Common myeloid progenitor, CD34-positive (primary cell): ENCODE measurements at regions of chr5 and their contacts with region 1.

Region 1: DNA sequence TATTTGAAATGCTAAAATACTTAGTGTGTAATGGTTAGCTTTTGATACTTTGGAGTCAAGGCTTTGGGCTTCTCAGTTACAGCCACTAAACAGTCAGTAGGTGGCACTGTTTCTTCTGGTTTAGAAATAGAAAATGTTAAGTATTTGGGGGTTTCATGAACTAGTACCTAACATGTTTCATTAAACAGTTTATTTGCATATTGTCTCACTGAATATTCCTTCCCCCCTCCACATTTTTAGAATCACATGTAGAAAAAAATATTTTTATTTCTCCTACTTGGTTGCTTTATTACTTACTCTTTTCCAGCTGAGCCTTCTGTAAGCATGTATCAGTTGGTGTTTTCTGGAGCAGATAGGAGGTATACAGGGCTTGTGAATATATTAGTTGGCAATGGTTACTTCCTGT is 48.0 kb downstream of the IPO11 start:
- DNase-seq: peak; percentile 47 to 78 (median 75)
- H3K4me3 ChIP-seq: no peak overlapping the region
- H3K27ac ChIP-seq: peak overlapping the region in 1 of 2 experiments; percentile 9
- H3K4me1 ChIP-seq: peaks cover 0 to 4% (median 2%) of the 10 kb centered on the region in 4 experiments
- H3K27me3 ChIP-seq: no peaks in the 10 kb centered on the region

Region 2: GRCh38 chr5:62448528-62448927 is 12.1 kb before region 1 on chr5:
- CTCF ChIA-PET with region 1: interaction called, 11 read pairs
- POLR2A ChIA-PET with region 1: no interaction called
- DNase-seq: no peak
- H3K4me3 ChIP-seq: no peak overlapping the region
- H3K27ac ChIP-seq: no peak overlapping the region
- H3K4me1 ChIP-seq: no peaks in the 10 kb centered on the region
- H3K27me3 ChIP-seq: no peaks in the 10 kb centered on the region

Region 3: GRCh38 chr5:62475072-62475471 is 14.5 kb after region 1 on chr5:
- CTCF ChIA-PET with region 1: interaction called, 10 read pairs
- POLR2A ChIA-PET with region 1: no interaction called
- DNase-seq: no peak
- H3K4me3 ChIP-seq: no peak overlapping the region
- H3K27ac ChIP-seq: no peak overlapping the region
- H3K4me1 ChIP-seq: peaks cover 0 to 9% (median 4%) of the 10 kb centered on the region in 4 experiments
- H3K27me3 ChIP-seq: no peaks in the 10 kb centered on the region

Region 4: GRCh38 chr5:62631909-62632580 is 171.5 kb after region 1 on chr5:
- CTCF ChIA-PET with region 1: interaction called, 32 read pairs
- POLR2A ChIA-PET with region 1: no interaction called
- DNase-seq: peak; percentile 39 to 58 (median 57)
- H3K4me3 ChIP-seq: no peak overlapping the region
- H3K27ac ChIP-seq: no peak overlapping the region
- H3K4me1 ChIP-seq: no peaks in the 10 kb centered on the region
- H3K27me3 ChIP-seq: no peaks in the 10 kb centered on the region

Region 5: DNA sequence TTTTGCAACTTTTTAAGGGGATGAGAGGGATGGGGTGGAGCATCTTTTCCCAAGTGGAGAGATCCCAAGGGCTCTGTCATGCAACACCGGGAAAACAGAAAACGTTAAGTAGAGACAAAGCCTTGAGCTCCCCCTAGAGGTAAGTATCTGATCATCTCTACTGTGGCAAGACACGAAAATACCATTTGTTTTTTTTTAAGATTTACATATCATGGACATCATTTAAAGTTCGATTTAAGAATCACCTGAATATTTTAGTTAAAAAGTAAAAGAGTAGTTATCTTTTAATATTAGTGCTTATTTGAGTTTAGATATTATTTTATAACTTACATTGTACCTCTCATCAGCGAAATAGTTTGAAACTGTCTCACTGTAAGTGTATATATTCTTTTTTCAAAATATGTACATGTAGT is 318.4 kb after region 1 on chr5:
- CTCF ChIA-PET with region 1: interaction called, 13 read pairs
- POLR2A ChIA-PET with region 1: no interaction called
- DNase-seq: peak; percentile 39 to 59 (median 54)
- H3K4me3 ChIP-seq: peak overlapping the region in 2 of 7 experiments; percentile 56 to 57
- H3K27ac ChIP-seq: no peak overlapping the region
- H3K4me1 ChIP-seq: peaks cover 0 to 10% (median 3%) of the 10 kb centered on the region in 4 experiments
- H3K27me3 ChIP-seq: no peaks in the 10 kb centered on the region